Natural killer cell (primary cell): ENCODE measurements at regions of chr7 and their contacts with region 1.

Region 1: GRCh38 chr7:104983578-104984539 is 30.1 kb upstream of the KMT2E start:
- DNase-seq: peak; percentile 81 to 90
- ATAC-seq: peak; percentile 88 to 97 (median 91)
- H3K4me3 ChIP-seq: peak overlapping the region; percentile 81
- H3K4me3 Mint-ChIP-seq: peak overlapping the region; percentile 98
- H3K27ac ChIP-seq: peak overlapping the region; percentile 98
- H3K27ac Mint-ChIP-seq: peak overlapping the region in 1 of 2 donors; percentile 98
- H3K4me1 ChIP-seq: peaks cover 16% of the 10 kb centered on the region
- H3K4me1 Mint-ChIP-seq: peaks cover 34 to 49% of the 10 kb centered on the region in 2 donors
- H3K27me3 ChIP-seq: no peaks in the 10 kb centered on the region
- H3K27me3 Mint-ChIP-seq: no peaks in the 10 kb centered on the region
- CTCF ChIP-seq: peak; percentile 65

Region 2: GRCh38 chr7:104943502-104944343 is 40.1 kb before region 1 on chr7:
- intact Hi-C with region 1: loop called (anchors 1 kb)
- DNase-seq: peak; percentile 54 to 84
- ATAC-seq: peak; percentile 21 to 58 (median 32)
- H3K4me3 ChIP-seq: peak overlapping the region; percentile 11
- H3K4me3 Mint-ChIP-seq: peak overlapping the region; percentile 85
- H3K27ac ChIP-seq: peak overlapping the region; percentile 89
- H3K27ac Mint-ChIP-seq: peak overlapping the region; percentile 100
- H3K4me1 ChIP-seq: peaks cover 61% of the 10 kb centered on the region
- H3K4me1 Mint-ChIP-seq: peaks cover 56 to 59% of the 10 kb centered on the region in 2 donors
- H3K27me3 ChIP-seq: no peaks in the 10 kb centered on the region
- H3K27me3 Mint-ChIP-seq: no peaks in the 10 kb centered on the region
- CTCF ChIP-seq: no peak

Region 3: GRCh38 chr7:105013221-105013815 is 29.5 kb after region 1 on chr7:
- intact Hi-C with region 1: loop called (anchors 1 kb)
- DNase-seq: peak; percentile 91 to 95
- ATAC-seq: peak; percentile 52 to 75 (median 53)
- H3K4me3 ChIP-seq: peak overlapping the region; percentile 97
- H3K4me3 Mint-ChIP-seq: peak overlapping the region; percentile 97
- H3K27ac ChIP-seq: peak overlapping the region; percentile 99
- H3K27ac Mint-ChIP-seq: peak overlapping the region; percentile 100
- H3K4me1 ChIP-seq: peaks cover 21% of the 10 kb centered on the region
- H3K4me1 Mint-ChIP-seq: peaks cover 78 to 82% of the 10 kb centered on the region in 2 donors
- H3K27me3 ChIP-seq: no peaks in the 10 kb centered on the region
- H3K27me3 Mint-ChIP-seq: no peaks in the 10 kb centered on the region
- CTCF ChIP-seq: peak; percentile 29

Region 4: GRCh38 chr7:105149827-105150226 is 166.0 kb after region 1 on chr7:
- intact Hi-C with region 1: no loop called
- DNase-seq: no peak
- ATAC-seq: no peak
- H3K4me3 ChIP-seq: no peak overlapping the region
- H3K4me3 Mint-ChIP-seq: no peak overlapping the region
- H3K27ac ChIP-seq: no peak overlapping the region
- H3K27ac Mint-ChIP-seq: peak overlapping the region in 1 of 2 donors; percentile 36
- H3K4me1 ChIP-seq: peaks cover 4% of the 10 kb centered on the region
- H3K4me1 Mint-ChIP-seq: peaks cover 28 to 33% of the 10 kb centered on the region in 2 donors
- H3K27me3 ChIP-seq: no peaks in the 10 kb centered on the region
- H3K27me3 Mint-ChIP-seq: no peaks in the 10 kb centered on the region
- CTCF ChIP-seq: no peak

Region 5: DNA sequence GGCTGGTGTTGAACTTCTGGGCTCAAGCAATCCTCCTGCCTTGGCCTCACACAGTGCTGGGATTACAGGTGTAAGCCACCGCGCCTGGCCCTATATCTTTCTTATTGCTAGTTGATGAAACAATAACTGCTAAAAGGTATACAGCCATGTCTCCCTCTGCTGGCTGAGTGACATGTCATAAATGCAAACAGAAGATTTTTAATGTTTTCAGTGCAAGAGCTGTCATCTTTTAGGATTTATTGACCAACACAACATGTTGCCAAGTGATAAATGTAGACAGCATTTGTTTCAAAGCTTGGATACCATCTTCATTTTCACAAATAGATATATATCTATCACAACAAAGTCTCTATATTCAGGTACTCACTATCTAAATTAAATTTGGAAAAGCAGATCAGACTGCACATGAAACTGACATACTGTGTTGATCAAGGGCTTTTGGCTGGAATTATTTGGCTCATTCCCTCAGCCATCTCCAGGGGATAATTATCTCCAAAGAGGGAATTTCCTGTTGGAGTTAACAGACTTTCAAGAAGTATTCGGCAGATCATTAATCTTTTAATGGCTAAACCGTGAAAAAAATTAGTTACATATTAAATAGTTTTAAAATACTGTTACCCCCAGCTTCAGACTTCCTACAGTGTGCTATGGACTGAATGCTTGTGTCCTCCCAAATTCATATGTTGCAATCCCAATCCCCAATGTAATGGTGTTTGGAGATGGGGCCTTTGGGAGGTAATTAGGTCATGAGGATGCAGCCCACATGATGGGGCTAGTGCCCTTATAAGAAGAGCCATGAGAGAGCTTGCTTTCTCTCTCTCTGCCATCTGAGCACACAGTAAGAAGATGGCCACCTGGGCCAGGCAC is 446.1 kb after region 1 on chr7:
- intact Hi-C with region 1: loop called (anchors 1 kb)
- DNase-seq: peak; percentile 19 to 79
- ATAC-seq: peak; percentile 44 to 75 (median 58)
- H3K4me3 ChIP-seq: no peak overlapping the region
- H3K4me3 Mint-ChIP-seq: no peak overlapping the region
- H3K27ac ChIP-seq: no peak overlapping the region
- H3K27ac Mint-ChIP-seq: no peak overlapping the region
- H3K4me1 ChIP-seq: no peaks in the 10 kb centered on the region
- H3K4me1 Mint-ChIP-seq: no peaks in the 10 kb centered on the region
- H3K27me3 ChIP-seq: no peaks in the 10 kb centered on the region
- H3K27me3 Mint-ChIP-seq: no peaks in the 10 kb centered on the region
- CTCF ChIP-seq: peak; percentile 57

Region 6: DNA sequence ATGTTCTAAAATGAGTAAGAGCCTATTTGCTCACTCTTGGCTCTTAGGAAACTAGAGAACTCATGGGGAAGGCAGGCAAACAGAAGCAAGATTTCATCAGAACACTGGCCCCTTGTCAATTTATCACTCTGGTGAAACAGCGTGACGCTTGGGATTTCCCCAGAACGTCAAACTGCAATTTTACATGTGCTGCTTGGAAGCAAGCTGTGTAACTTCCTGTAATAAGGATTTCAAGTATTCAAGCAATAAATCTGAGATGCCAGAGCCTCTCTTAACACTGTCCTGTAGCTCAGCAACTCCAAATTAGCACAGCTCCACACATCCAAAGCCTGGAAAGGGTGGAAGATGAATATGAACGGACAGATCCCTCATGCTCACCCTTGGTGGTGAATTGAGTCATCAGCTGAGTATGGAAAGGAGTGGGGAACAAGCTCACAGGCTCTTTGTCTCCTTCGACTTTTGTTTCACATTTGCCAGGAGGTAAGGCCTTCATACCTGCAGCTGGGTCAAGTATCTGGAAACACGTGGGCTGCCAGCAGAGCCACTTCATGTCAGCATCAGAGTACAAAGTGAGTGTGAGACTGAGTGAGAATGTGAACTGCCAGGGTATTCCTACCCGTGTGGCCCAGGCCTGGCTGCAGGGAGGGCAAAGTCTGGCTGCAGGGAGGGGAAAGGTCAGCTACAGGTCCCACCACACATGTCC is 1441.3 kb after region 1 on chr7:
- intact Hi-C with region 1: no loop called
- DNase-seq: peak in 1 of 2 donors; percentile 66
- ATAC-seq: peak; percentile 73 to 85 (median 80)
- H3K4me3 ChIP-seq: no peak overlapping the region
- H3K4me3 Mint-ChIP-seq: no peak overlapping the region
- H3K27ac ChIP-seq: no peak overlapping the region
- H3K27ac Mint-ChIP-seq: no peak overlapping the region
- H3K4me1 ChIP-seq: peaks cover 9% of the 10 kb centered on the region
- H3K4me1 Mint-ChIP-seq: no peaks in the 10 kb centered on the region
- H3K27me3 ChIP-seq: no peaks in the 10 kb centered on the region
- H3K27me3 Mint-ChIP-seq: peaks cover 7 to 11% of the 10 kb centered on the region in 2 donors
- CTCF ChIP-seq: no peak